Thyroid gland (tissue), 4 donors: ENCODE measurements at regions of chr19 and their contacts with region 1.

Region 1: DNA sequence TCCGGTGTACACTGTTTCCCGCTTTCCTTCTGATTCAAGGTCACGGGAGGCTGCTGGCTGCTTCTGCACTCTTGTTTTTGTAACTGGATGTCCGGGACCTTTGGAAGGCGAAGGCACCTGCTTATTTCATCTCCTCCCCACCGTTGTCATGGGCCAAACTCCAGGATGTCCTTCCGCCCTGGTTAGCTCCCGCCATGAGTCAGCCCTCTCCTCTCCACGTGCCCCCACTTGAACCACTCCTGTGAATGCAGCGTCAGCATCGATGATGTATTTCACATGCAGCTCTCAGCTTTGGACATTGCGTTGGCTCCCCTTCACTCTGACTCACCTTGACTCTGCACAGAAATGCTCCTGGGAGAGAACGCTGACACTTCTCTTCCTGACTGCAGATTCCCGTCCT is 5.5 kb upstream of the GALP start:
- DNase-seq: peak; percentile 89 to 91
- H3K4me3 ChIP-seq: no peak overlapping the region
- H3K27ac ChIP-seq: peak overlapping the region in 1 of 3 donors; percentile 10
- H3K4me1 ChIP-seq: peaks cover 3 to 10% of the 10 kb centered on the region in 2 donors
- H3K27me3 ChIP-seq: no peaks in the 10 kb centered on the region
- CTCF ChIP-seq: no peak
- POLR2A ChIP-seq: peak in 1 of 2 donors; percentile 37

Region 2: DNA sequence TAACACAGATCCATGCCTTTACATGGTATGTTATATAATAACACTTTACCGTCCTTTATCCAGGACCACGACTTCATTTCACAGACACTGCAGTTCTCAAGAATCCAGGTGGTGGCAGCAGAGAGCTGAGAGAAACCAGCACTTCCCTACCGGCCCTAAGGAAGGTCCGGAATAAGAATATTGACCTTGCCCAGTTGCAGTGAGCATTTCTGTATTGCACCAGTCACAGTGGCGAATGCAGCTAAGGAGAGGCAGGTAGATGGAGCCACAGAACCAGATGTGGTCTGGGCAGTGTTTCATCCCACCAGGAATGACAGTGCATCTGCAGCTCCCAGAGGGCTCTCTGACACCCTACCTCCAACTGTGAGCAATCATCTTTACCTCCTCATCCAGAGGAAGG is 93.8 kb before region 1 on chr19:
- intact Hi-C with region 1: loop called (anchors 5 kb)
- DNase-seq: peak; percentile 59 to 65
- H3K4me3 ChIP-seq: no peak overlapping the region
- H3K27ac ChIP-seq: no peak overlapping the region
- H3K4me1 ChIP-seq: peaks cover 7 to 9% of the 10 kb centered on the region in 2 donors
- H3K27me3 ChIP-seq: no peaks in the 10 kb centered on the region
- CTCF ChIP-seq: peak; percentile 61 to 93 (median 80)
- POLR2A ChIP-seq: no peak

Region 3: DNA sequence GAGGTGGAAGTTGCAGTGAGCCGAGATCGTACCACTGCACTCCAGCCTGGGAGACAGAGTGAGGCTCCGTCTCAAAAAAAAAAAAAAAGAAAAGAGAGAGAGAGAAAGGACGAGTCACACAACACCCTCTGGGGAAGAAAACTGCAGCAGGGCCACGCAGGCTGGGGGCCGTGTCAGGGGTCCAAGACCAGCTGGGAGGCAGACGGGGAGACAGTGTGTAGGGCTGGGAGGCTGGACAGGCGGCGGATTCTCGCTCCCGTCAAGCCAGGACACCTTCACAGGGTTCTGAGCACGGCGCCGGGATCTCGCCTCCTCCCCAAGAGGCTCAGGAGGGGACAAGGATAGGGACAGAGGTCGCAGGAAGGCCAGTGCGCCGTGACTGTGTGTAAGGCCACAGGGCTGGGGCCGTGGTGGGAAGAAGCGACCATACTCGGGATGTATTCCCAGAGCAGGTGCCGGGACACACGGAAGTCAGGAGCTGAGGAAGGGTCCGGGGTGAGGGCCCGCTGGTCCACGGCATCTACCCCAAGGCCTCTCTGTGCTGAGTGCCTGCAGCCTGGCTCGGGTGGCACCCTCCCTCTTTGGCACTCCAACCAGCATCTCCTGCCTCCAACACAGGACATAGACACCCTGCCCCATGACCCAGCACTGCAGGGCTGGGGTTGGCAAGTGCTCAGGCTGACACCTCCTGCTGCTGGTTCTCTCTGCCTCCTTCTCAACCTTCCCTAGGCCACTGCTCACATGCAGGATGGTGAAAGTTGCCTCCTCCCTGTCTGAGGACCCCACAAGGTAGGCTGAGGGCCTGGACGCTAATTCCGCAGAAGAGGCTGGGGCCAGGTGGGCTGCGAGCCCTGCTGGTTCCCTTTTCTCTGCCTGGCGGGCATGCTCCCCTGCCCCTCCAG is 70.4 kb before region 1 on chr19:
- intact Hi-C with region 1: loop called (anchors 5 kb)
- DNase-seq: no peak
- H3K4me3 ChIP-seq: no peak overlapping the region
- H3K27ac ChIP-seq: no peak overlapping the region
- H3K4me1 ChIP-seq: peaks cover 4 to 5% of the 10 kb centered on the region in 2 donors
- H3K27me3 ChIP-seq: no peaks in the 10 kb centered on the region
- CTCF ChIP-seq: no peak
- POLR2A ChIP-seq: no peak

Region 4: DNA sequence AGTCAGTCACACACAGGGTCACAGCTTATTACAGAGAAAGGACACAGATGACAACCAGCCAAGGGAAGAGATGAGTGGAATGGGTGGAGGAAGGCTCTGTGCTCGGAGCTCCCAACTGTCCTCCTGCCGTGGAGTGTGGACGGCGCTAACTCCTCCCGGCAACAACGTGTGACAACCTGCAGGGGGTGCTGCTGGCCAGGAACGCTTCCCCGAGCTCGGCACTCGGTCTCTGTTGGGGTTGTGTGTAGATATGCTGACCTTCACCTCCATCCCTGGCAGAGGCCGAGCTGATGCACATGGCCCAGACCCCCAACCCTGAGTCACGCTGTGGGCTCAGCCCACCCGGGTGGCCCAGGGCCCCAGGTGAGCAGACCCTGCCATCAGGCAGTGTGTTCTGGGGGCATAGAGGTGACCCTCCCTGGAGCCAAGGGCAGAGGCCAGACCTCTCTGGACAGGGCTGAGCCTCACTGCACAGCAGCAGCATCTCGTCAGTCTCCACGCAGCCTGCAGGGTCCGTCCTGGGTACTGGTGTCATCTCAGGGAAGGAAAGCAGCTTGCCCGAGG is 15.1 kb before region 1 on chr19:
- intact Hi-C with region 1: no loop called
- DNase-seq: no peak
- H3K4me3 ChIP-seq: no peak overlapping the region
- H3K27ac ChIP-seq: no peak overlapping the region
- H3K4me1 ChIP-seq: no peaks in the 10 kb centered on the region
- H3K27me3 ChIP-seq: no peaks in the 10 kb centered on the region
- CTCF ChIP-seq: peak in 1 of 6 experiments; percentile 13
- POLR2A ChIP-seq: no peak

Region 5: GRCh38 chr19:56441206-56441792 is 271.0 kb after region 1 on chr19:
- intact Hi-C with region 1: no loop called
- DNase-seq: no peak
- H3K4me3 ChIP-seq: no peak overlapping the region
- H3K27ac ChIP-seq: no peak overlapping the region
- H3K4me1 ChIP-seq: no peaks in the 10 kb centered on the region
- H3K27me3 ChIP-seq: no peaks in the 10 kb centered on the region
- CTCF ChIP-seq: no peak
- POLR2A ChIP-seq: no peak